ENCODE measurements at regions of chr6 and their contacts with region 1.

Region 1: GRCh38 chr6:42547407-42548329 is 16.2 kb upstream of the UBR2 start:
- DNase-seq: peak; percentile 75 to 87 (median 82)
- H3K4me3 ChIP-seq: peak overlapping the region; percentile 62
- H3K4me3 Mint-ChIP-seq: peak overlapping the region in 6 of 7 donors; percentile 66 to 74 (median 70)
- H3K27ac ChIP-seq: no peak overlapping the region
- H3K27ac Mint-ChIP-seq: peak overlapping the region in 4 of 8 donors; percentile 47 to 86 (median 59)
- H3K4me1 ChIP-seq: peaks cover 11% of the 10 kb centered on the region
- H3K4me1 Mint-ChIP-seq: peaks cover 6 to 12% (median 12%) of the 10 kb centered on the region in 3 donors
- H3K27me3 ChIP-seq: no peaks in the 10 kb centered on the region
- H3K27me3 Mint-ChIP-seq: peaks cover 2 to 5% of the 10 kb centered on the region in 2 donors

Region 2: GRCh38 chr6:42230345-42231321 is 317.0 kb before region 1 on chr6:
- CTCF ChIA-PET with region 1: interaction called, 10 read pairs
- POLR2A ChIA-PET with region 1: no interaction called
- DNase-seq: no peak
- H3K4me3 ChIP-seq: no peak overlapping the region
- H3K4me3 Mint-ChIP-seq: peak overlapping the region in 1 of 7 donors; percentile 29
- H3K27ac ChIP-seq: no peak overlapping the region
- H3K27ac Mint-ChIP-seq: no peak overlapping the region
- H3K4me1 ChIP-seq: no peaks in the 10 kb centered on the region
- H3K4me1 Mint-ChIP-seq: no peaks in the 10 kb centered on the region
- H3K27me3 ChIP-seq: no peaks in the 10 kb centered on the region
- H3K27me3 Mint-ChIP-seq: peaks cover 0 to 2% of the 10 kb centered on the region in 2 donors

Region 3: GRCh38 chr6:42279144-42279781 is 268.4 kb before region 1 on chr6:
- CTCF ChIA-PET with region 1: interaction called, 17 read pairs
- POLR2A ChIA-PET with region 1: no interaction called
- DNase-seq: peak in 3 of 5 donors; percentile 18 to 65 (median 57)
- H3K4me3 ChIP-seq: no peak overlapping the region
- H3K4me3 Mint-ChIP-seq: peak overlapping the region; percentile 43 to 90 (median 73)
- H3K27ac ChIP-seq: peak overlapping the region; percentile 28
- H3K27ac Mint-ChIP-seq: peak overlapping the region; percentile 87 to 96 (median 93)
- H3K4me1 ChIP-seq: peaks cover 54% of the 10 kb centered on the region
- H3K4me1 Mint-ChIP-seq: peaks cover 66 to 72% (median 72%) of the 10 kb centered on the region in 3 donors
- H3K27me3 ChIP-seq: no peaks in the 10 kb centered on the region
- H3K27me3 Mint-ChIP-seq: peaks cover 0 to 4% of the 10 kb centered on the region in 2 donors

Region 4: GRCh38 chr6:42390228-42390934 is 157.3 kb before region 1 on chr6:
- CTCF ChIA-PET with region 1: interaction called, 11 read pairs
- POLR2A ChIA-PET with region 1: interaction called, 11 read pairs
- DNase-seq: peak in 3 of 5 donors; percentile 74 to 82 (median 80)
- H3K4me3 ChIP-seq: peak overlapping the region; percentile 29
- H3K4me3 Mint-ChIP-seq: peak overlapping the region; percentile 66 to 88 (median 78)
- H3K27ac ChIP-seq: peak overlapping the region; percentile 67
- H3K27ac Mint-ChIP-seq: peak overlapping the region; percentile 93 to 99 (median 97)
- H3K4me1 ChIP-seq: peaks cover 98% of the 10 kb centered on the region
- H3K4me1 Mint-ChIP-seq: peaks cover 96 to 99% (median 98%) of the 10 kb centered on the region in 3 donors
- H3K27me3 ChIP-seq: no peaks in the 10 kb centered on the region
- H3K27me3 Mint-ChIP-seq: peaks cover 0 to 3% of the 10 kb centered on the region in 2 donors

Region 5: GRCh38 chr6:42522942-42523814 is 24.5 kb before region 1 on chr6:
- CTCF ChIA-PET with region 1: interaction called, 5 read pairs
- POLR2A ChIA-PET with region 1: interaction called, 10 read pairs
- DNase-seq: no peak
- H3K4me3 ChIP-seq: no peak overlapping the region
- H3K4me3 Mint-ChIP-seq: no peak overlapping the region
- H3K27ac ChIP-seq: no peak overlapping the region
- H3K27ac Mint-ChIP-seq: peak overlapping the region in 1 of 8 donors; percentile 63
- H3K4me1 ChIP-seq: no peaks in the 10 kb centered on the region
- H3K4me1 Mint-ChIP-seq: peaks cover 0 to 5% (median 0%) of the 10 kb centered on the region in 3 donors
- H3K27me3 ChIP-seq: no peaks in the 10 kb centered on the region
- H3K27me3 Mint-ChIP-seq: peaks cover 0 to 2% of the 10 kb centered on the region in 2 donors

Measured in CD8-positive, alpha-beta memory T cell (primary cell).